HAP-1 (cell line): ENCODE measurements at regions of chr22 and their contacts with region 1.

Region 1: GRCh38 chr22:16601437-16602245 is 9.0 kb upstream of the CCT8L2 start:
- DNase-seq: peak; percentile 34 to 66
- H3K4me3 ChIP-seq: peak overlapping the region; percentile 65
- H3K4me1 ChIP-seq: peaks cover 9% of the 10 kb centered on the region
- H3K27me3 ChIP-seq: no peaks in the 10 kb centered on the region

Region 2: DNA sequence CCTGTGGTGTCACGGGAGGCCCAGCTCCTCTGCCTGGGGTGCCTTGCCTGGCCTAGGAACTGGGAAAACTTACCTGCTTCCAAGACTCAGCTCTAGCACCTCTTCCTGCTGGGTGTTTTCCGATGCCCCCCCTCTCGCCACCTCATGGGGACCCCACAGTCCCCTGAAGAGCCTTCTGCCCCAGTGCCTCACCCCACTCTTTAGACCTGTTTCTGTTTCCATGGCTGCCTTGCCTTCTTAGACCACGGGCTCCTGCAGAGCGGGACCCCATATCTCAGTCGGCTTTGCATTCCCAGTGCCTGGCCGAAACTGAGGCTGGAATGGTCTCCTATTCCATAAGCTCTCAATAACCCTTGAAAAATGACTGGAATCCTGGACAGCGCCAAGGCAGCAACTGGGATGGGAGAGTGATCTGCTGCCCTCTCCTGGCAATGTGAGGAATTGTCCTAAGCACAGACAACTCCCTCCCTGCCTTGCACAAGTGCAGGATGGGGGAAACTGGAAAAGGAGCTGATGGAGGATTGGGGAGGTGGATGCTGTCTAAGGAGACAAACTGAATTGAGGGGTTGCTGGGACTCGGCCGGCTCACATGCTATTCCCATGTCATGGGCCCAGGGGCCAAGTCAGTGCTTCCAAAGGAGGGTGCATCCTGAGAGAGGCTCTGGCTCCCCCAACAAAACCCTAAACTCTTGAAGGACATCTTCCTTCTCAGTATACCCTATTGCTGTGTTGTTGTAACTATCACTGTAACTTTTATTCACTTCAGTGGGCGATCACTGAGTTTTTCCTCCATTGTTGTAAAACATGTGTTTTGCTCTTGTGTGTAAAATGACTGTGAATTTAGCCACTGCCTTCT is 456.5 kb after region 1 on chr22:
- in situ Hi-C with region 1: loop called (anchors 25 kb)
- DNase-seq: peak; percentile 70 to 82
- H3K4me3 ChIP-seq: no peak overlapping the region
- H3K4me1 ChIP-seq: peaks cover under 1% of the 10 kb centered on the region
- H3K27me3 ChIP-seq: peaks cover 4% of the 10 kb centered on the region; the same call in 1 of the 2 replicates

Region 3: DNA sequence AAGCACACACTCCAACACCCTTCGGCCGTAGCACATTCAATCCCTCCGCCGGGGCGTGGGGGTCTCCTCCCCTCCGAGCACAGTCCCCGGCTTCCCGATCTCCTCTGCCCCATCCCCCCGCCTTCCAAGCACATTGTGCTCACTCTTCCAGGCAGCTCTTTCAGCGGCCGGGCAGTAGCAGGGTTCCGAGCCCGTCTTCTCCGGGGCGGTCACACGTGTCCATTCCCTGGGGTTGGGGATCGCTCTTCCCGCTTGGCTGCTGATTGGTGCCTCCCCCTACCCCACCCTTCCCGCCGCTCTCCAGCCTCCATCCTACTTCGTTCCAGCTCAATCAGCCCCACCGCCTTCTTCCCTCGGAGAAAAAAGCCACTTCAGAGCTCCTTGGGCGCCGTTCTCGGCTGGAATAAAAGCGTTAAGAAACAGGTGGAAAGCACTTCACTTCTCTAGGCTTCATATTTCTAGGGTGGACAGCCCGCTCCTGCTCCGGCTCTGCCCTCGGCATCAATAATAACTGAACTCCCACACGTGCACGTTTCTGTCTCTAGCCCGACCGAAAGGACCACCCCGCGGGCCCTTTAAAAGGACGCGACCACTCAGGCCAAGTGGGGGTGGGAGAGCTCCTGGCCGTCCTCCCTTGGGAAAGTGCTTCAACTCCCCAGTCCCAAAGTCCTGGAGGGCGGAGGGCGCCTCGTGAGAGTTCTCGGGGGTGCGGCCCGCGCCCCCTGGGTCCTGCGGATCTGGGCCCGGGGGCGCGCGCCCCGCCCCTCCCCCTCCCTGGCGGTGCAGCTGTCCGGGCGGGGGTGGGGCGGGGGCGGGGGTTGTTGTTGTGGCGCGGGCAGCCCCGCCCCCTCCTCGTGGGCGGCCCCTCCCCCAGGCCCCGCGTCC is 767.2 kb after region 1 on chr22:
- in situ Hi-C with region 1: loop called (anchors 25 kb)
- DNase-seq: peak; percentile 78 to 89
- H3K4me3 ChIP-seq: peak overlapping the region; percentile 47
- H3K4me1 ChIP-seq: peaks cover 24% of the 10 kb centered on the region
- H3K27me3 ChIP-seq: no peaks in the 10 kb centered on the region